ENCODE measurements at regions of chr16 and their contacts with region 1.

Region 1: GRCh38 chr16:89330177-89330856 is 112.8 kb downstream of the ZNF778 start:
- DNase-seq: peak in 6 of 14 experiments; percentile 32 to 84 (median 72)
- ATAC-seq: peak; percentile 67
- H3K4me3 ChIP-seq: peak overlapping the region; percentile 13
- H3K4me3 Mint-ChIP-seq: peak overlapping the region; percentile 10
- H3K27ac ChIP-seq: peak overlapping the region; percentile 60 to 67
- H3K27ac Mint-ChIP-seq: peak overlapping the region; percentile 80
- H3K4me1 ChIP-seq: peaks cover 82% of the 10 kb centered on the region
- H3K4me1 Mint-ChIP-seq: peaks cover 84% of the 10 kb centered on the region
- H3K27me3 ChIP-seq: no peaks in the 10 kb centered on the region
- H3K27me3 Mint-ChIP-seq: no peaks in the 10 kb centered on the region
- CTCF ChIP-seq: no peak

Region 2: GRCh38 chr16:89175280-89176146 is 154.8 kb before region 1 on chr16:
- CTCF ChIA-PET with region 1: no interaction called
- POLR2A ChIA-PET with region 1: no interaction called
- intact Hi-C with region 1: no loop called
- DNase-seq: no peak
- ATAC-seq: no peak
- H3K4me3 ChIP-seq: no peak overlapping the region
- H3K4me3 Mint-ChIP-seq: no peak overlapping the region
- H3K27ac ChIP-seq: no peak overlapping the region
- H3K27ac Mint-ChIP-seq: no peak overlapping the region
- H3K4me1 ChIP-seq: peaks cover 10% of the 10 kb centered on the region
- H3K4me1 Mint-ChIP-seq: peaks cover 6% of the 10 kb centered on the region
- H3K27me3 ChIP-seq: no peaks in the 10 kb centered on the region
- H3K27me3 Mint-ChIP-seq: peaks cover 4% of the 10 kb centered on the region
- CTCF ChIP-seq: no peak

Region 3: GRCh38 chr16:89319883-89320781 is 10.2 kb before region 1 on chr16:
- CTCF ChIA-PET with region 1: interaction called, 3 read pairs
- POLR2A ChIA-PET with region 1: interaction called, 7 read pairs
- intact Hi-C with region 1: loop called in 1 of 2 experiments (anchors 2 kb)
- DNase-seq: peak in 5 of 14 experiments; percentile 21 to 55 (median 45)
- ATAC-seq: no peak
- H3K4me3 ChIP-seq: no peak overlapping the region
- H3K4me3 Mint-ChIP-seq: peak overlapping the region; percentile 38
- H3K27ac ChIP-seq: no peak overlapping the region
- H3K27ac Mint-ChIP-seq: peak overlapping the region; percentile 98
- H3K4me1 ChIP-seq: peaks cover 100% of the 10 kb centered on the region
- H3K4me1 Mint-ChIP-seq: peaks cover 91% of the 10 kb centered on the region
- H3K27me3 ChIP-seq: no peaks in the 10 kb centered on the region
- H3K27me3 Mint-ChIP-seq: no peaks in the 10 kb centered on the region
- CTCF ChIP-seq: no peak

Region 4: GRCh38 chr16:89641458-89642119 is 311.3 kb after region 1 on chr16:
- CTCF ChIA-PET with region 1: no interaction called
- POLR2A ChIA-PET with region 1: no interaction called
- intact Hi-C with region 1: loop called in 1 of 2 experiments (anchors 10 kb)
- DNase-seq: no peak
- ATAC-seq: no peak
- H3K4me3 ChIP-seq: no peak overlapping the region
- H3K4me3 Mint-ChIP-seq: peak overlapping the region; percentile 78
- H3K27ac ChIP-seq: no peak overlapping the region
- H3K27ac Mint-ChIP-seq: peak overlapping the region; percentile 57
- H3K4me1 ChIP-seq: peaks cover 13% of the 10 kb centered on the region
- H3K4me1 Mint-ChIP-seq: peaks cover 11% of the 10 kb centered on the region
- H3K27me3 ChIP-seq: no peaks in the 10 kb centered on the region
- H3K27me3 Mint-ChIP-seq: no peaks in the 10 kb centered on the region
- CTCF ChIP-seq: peak; percentile 34

Measured in CD4-positive, alpha-beta T cell (primary cell).